Activated T-helper 2 cell treated with anti-CD3 and anti-CD28 coated beads, Interferon-gamma antibody, Interleukin-2, Interleukin-4, amounts not matched to agents 10 μg/mL and 5 μg/mL and 100 μg/mL, durations not matched to agents 14 hours and 24 hours and 36 hours (primary cell): ENCODE measurements at regions of chr10 and their contacts with region 1.

Region 1: DNA sequence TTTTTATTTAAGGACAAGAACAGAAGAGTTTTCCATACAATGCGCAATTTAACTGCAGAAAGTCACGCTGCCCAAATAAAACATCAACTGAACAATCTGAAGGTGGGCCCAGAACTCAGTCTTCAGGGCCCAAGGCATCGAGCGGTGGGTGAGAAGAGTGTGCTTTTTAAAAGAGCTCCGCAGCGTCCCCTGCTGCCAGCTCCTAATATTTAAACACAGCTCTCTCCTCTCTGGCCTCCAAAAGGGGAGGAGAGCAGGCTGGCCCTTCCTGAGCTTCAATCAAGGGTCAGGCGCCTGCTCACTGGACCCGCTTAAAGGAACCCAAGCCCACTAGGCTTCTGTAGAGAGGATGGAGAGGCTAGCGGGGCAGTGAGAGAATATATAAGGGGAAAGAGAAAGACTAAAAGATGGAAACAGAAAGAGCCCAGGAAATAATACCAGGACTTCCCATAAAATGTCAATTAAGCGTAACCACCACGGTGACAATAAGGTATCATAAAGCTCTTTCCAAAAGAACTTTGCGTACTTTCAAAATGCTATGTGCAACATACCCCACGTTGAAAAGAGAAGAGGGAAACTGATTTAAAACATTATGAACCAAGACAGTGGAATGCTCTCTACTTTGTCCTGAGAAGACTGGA is 2.8 kb downstream of the FAM53B start:
- DNase-seq: peak; percentile 58
- H3K4me3 Mint-ChIP-seq: peak overlapping the region; percentile 80
- H3K27ac Mint-ChIP-seq: peak overlapping the region; percentile 67
- H3K4me1 Mint-ChIP-seq: peaks cover 49% of the 10 kb centered on the region
- H3K27me3 Mint-ChIP-seq: peaks cover 6% of the 10 kb centered on the region

Region 2: GRCh38 chr10:124530215-124530665 is 211.2 kb before region 1 on chr10:
- intact Hi-C with region 1: loop called (anchors 1 kb)
- DNase-seq: peak; percentile 76
- H3K4me3 Mint-ChIP-seq: no peak overlapping the region
- H3K27ac Mint-ChIP-seq: no peak overlapping the region
- H3K4me1 Mint-ChIP-seq: peaks cover 3% of the 10 kb centered on the region
- H3K27me3 Mint-ChIP-seq: peaks cover 12% of the 10 kb centered on the region

Region 3: GRCh38 chr10:124632064-124632531 is 109.3 kb before region 1 on chr10:
- intact Hi-C with region 1: loop called (anchors 1 kb)
- DNase-seq: no peak
- H3K4me3 Mint-ChIP-seq: no peak overlapping the region
- H3K27ac Mint-ChIP-seq: no peak overlapping the region
- H3K4me1 Mint-ChIP-seq: peaks cover 18% of the 10 kb centered on the region
- H3K27me3 Mint-ChIP-seq: peaks cover 9% of the 10 kb centered on the region

Region 4: DNA sequence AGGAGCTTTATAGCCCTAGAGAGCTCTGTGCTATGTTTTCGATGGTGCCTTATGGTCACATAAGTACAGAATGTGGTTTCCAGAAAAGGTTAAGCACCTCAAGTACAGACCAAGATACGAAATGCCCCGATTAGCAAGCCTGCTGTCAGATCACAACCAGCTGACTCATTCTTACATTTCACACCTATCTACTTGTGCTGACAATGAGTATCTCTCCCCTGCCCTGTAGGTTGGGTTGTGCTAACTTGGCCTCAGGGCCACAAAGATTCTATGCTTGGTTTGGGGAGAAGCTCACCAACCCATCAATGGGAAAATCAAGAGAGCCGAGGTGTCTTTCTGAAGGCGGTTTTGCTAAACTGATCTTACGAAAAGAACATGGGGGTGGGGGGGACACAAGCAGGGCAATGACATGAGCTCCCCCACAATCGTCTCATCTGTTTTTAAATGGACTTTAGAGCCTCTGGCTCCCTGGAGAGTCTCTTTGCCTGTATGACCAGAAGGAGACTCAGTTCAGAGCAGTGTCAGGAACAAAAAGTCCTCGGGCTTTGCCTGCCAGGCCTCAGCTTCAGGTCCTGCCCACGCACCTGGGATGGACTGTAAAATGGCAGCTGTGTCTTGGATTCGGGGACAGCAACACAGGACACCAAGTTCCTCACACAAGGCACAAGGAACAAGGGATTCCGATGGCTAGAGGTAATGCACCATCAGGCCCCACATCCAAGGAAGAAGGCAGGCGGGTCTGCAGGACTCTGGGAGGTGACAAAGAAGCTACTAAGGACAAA is 52.3 kb before region 1 on chr10:
- intact Hi-C with region 1: loop called (anchors 2 kb)
- DNase-seq: peak; percentile 48
- H3K4me3 Mint-ChIP-seq: peak overlapping the region; percentile 26
- H3K27ac Mint-ChIP-seq: peak overlapping the region; percentile 80
- H3K4me1 Mint-ChIP-seq: peaks cover 69% of the 10 kb centered on the region
- H3K27me3 Mint-ChIP-seq: no peaks in the 10 kb centered on the region

Region 5: GRCh38 chr10:124791378-124792348 is 50.3 kb after region 1 on chr10 and contains the start of gene EEF1AKMT2:
- intact Hi-C with region 1: loop called (anchors 5 kb)
- DNase-seq: peak; percentile 77
- H3K4me3 Mint-ChIP-seq: peak within 1 kb of the TSS; percentile 97
- H3K27ac Mint-ChIP-seq: peak within 1 kb of the TSS; percentile 95
- H3K4me1 Mint-ChIP-seq: peaks cover 15% of the 10 kb centered on the region
- H3K27me3 Mint-ChIP-seq: peaks cover 7% of the 10 kb centered on the region
- total RNA-seq, gene EEF1AKMT2: 20.9 and 21.0 TPM in 2 replicates